Heart left ventricle (tissue), 16 donors: ENCODE measurements at regions of chr7 and their contacts with region 1.

Region 1: DNA sequence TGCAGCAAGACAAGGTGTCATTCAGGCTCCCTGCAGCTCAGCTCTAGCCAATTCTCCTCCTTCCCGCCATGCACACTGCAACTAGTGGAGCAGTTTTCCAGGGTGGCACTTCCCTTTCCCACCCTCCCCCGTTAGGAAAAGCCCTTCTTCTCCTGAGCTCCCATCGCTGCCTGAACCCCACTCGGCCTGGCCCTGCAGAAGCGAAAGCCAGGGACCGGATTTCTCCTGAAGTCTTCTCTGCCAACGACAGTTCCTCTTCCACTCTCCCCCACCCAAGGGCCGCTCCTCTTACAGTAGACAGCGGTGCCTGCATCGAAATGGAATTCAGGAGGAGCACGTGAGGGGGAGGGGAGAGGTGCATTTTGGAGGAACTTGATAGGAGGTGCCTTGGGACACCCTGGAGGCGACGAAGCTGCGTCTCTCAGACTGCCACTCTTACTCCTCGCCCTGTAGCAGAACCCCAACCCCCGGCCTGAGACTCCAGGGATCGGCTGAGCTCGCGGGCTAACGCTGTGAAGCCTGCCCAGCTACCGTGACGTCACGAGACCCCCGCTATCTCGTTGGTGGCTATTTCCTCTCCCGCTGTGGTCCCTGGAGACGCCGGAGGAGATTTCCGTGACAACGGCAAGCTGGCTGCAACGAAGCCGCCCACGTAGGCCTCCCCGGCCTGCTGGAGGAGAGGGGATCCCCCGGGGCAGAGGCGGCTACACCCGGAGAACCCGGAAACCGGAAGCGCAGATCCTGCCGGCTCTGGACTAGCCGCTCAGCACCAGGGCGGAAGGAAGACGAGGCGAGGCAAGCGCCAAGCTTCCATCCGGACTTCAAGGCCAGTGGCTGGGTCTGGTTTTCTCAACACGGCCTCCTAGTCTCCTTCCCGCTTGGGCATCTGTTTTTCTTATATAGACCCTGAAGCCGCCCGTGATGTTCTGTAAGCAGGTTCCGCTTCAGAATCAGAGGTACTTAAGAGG is 109.7 kb downstream of the RALA start:
- DNase-seq: peak; percentile 97 to 98 (median 98)
- ATAC-seq: peak; percentile 95 to 98 (median 97)
- H3K4me3 ChIP-seq: peak overlapping the region; percentile 8 to 72 (median 60)
- H3K27ac ChIP-seq: peak overlapping the region in 11 of 12 donors; percentile 41 to 90 (median 76)
- H3K4me1 ChIP-seq: peaks cover 0 to 40% (median 21%) of the 10 kb centered on the region in 12 donors
- H3K27me3 ChIP-seq: no peaks in the 10 kb centered on the region
- CTCF ChIP-seq: no peak
- POLR2A ChIP-seq: peak in 1 of 2 donors; percentile 13

Region 2: DNA sequence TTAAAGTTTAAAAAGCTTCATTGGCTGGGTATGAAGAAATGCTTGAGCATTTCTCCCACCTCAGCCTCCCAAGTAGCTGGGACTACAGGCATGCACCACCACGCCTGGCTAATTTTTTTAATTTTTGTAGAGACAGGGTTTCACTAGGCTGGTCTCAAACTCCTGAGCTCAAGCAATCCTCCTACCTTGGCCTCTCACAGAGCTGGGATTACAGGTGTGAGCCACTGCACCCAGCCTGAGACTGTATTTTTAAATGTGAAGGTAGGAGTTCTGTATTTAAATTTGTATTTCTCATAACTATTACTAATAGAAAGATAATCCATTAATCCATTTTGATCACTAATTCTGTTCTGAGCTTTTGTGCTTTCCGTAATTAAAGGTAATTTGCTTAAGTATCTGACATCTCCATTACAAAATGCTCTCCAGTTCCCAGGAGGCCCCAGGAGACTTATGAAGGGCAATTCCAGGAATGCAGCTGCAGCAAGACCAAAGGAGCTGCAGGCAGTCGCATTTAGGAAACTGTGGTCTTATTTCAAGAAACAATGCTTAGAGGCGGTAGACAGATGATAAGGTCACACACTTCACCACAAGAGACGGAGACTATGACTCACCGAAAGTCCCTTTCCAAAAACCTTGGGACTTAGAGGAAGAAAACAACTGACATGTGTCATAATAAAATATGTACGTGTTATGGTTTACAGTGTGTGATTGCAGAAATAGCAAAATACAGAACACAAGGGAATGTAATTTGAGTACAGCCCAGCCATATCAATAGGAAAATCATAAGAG is 143.6 kb before region 1 on chr7:
- intact Hi-C with region 1: loop called in 1 of 10 experiments (anchors 2 kb)
- DNase-seq: peak in 2 of 5 donors; percentile 25 to 47
- ATAC-seq: peak in 3 of 4 donors; percentile 85 to 93 (median 89)
- H3K4me3 ChIP-seq: no peak overlapping the region
- H3K27ac ChIP-seq: peak overlapping the region in 2 of 12 donors; percentile 15 to 22
- H3K4me1 ChIP-seq: peaks cover 0 to 28% (median 11%) of the 10 kb centered on the region in 12 donors
- H3K27me3 ChIP-seq: no peaks in the 10 kb centered on the region
- CTCF ChIP-seq: no peak
- POLR2A ChIP-seq: no peak

Region 3: DNA sequence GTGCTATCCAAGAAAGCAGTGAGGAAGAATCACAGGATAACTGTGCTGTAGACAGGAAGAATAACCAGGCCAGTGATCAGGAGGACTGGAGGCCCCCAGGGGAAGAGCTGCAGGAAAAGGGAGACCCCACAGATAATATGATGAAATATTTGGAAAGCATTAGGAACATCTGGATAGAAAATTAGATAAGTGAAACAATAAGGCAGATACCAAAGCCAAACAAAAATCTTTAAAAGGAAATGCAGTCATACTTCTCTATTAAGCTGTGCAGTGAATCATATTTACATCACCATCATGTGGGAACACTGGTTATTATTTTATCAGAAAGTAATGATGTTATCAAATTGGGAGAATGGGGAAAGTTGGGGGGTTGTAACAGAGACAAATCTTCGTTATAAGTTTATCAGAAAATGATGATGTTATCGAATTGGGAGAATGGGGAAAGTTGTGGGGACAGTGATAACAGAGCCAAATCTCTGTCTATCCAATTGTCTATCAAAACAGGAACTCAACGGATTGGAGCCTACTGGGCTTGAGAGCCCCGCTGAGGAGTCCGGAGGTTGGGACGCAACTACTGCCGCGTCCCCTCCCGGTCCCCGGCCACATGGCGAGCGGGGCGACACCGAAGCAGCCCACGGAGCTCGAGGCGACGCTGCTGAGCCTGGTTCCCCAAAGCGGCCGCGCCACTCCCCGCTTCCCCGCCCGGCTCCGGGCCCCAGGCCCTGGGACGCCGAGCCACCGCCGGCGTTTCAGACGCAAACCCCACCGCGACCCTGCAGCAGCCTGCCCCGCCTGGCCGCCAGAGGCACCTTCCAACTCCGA is 123.8 kb before region 1 on chr7:
- intact Hi-C with region 1: loop called in 1 of 10 experiments (anchors 10 kb)
- DNase-seq: peak; percentile 19 to 70 (median 39)
- ATAC-seq: peak in 3 of 4 donors; percentile 71 to 83 (median 82)
- H3K4me3 ChIP-seq: peak overlapping the region; percentile 12 to 57 (median 42)
- H3K27ac ChIP-seq: peak overlapping the region in 10 of 12 donors; percentile 41 to 84 (median 65)
- H3K4me1 ChIP-seq: peaks cover 0 to 35% (median 17%) of the 10 kb centered on the region in 12 donors
- H3K27me3 ChIP-seq: no peaks in the 10 kb centered on the region
- CTCF ChIP-seq: peak in 3 of 12 donors; percentile 9 to 19 (median 17)
- POLR2A ChIP-seq: no peak

Region 4: GRCh38 chr7:39686261-39686924 is 46.7 kb before region 1 on chr7:
- intact Hi-C with region 1: loop called in 1 of 10 experiments (anchors 5 kb)
- DNase-seq: no peak
- ATAC-seq: no peak
- H3K4me3 ChIP-seq: no peak overlapping the region
- H3K27ac ChIP-seq: no peak overlapping the region
- H3K4me1 ChIP-seq: peaks cover 3 to 33% (median 27%) of the 10 kb centered on the region in 12 donors
- H3K27me3 ChIP-seq: no peaks in the 10 kb centered on the region
- CTCF ChIP-seq: no peak
- POLR2A ChIP-seq: no peak